ENCODE measurements at regions of chr15 and their contacts with region 1.

Region 1: GRCh38 chr15:78162038-78162437 is 12.9 kb downstream of the IDH3A start:
- DNase-seq: no peak
- H3K4me3 ChIP-seq: no peak overlapping the region
- H3K27ac ChIP-seq: no peak overlapping the region
- H3K4me1 ChIP-seq: no peaks in the 10 kb centered on the region
- H3K27me3 ChIP-seq: no peaks in the 10 kb centered on the region
- CTCF ChIP-seq: no peak
- EP300 ChIP-seq: no peak
- POLR2A ChIP-seq: no peak

Region 2: GRCh38 chr15:78726870-78727551 is 565.0 kb after region 1 on chr15:
- intact Hi-C with region 1: loop called in 1 of 4 experiments (anchors 5 kb)
- DNase-seq: no peak
- H3K4me3 ChIP-seq: no peak overlapping the region
- H3K27ac ChIP-seq: no peak overlapping the region
- H3K4me1 ChIP-seq: no peaks in the 10 kb centered on the region
- H3K27me3 ChIP-seq: no peaks in the 10 kb centered on the region
- CTCF ChIP-seq: no peak
- EP300 ChIP-seq: no peak
- POLR2A ChIP-seq: no peak